CD4-positive, alpha-beta memory T cell (primary cell): ENCODE measurements at regions of chr3 and their contacts with region 1.

Region 1: GRCh38 chr3:125310623-125311081 is 64.5 kb downstream of the ZNF148 start:
- DNase-seq: peak; percentile 40 to 63 (median 46)
- H3K4me3 ChIP-seq: peak overlapping the region; percentile 37 to 60
- H3K4me3 Mint-ChIP-seq: peak overlapping the region; percentile 86 to 96 (median 92)
- H3K27ac ChIP-seq: peak overlapping the region; percentile 61
- H3K27ac Mint-ChIP-seq: peak overlapping the region; percentile 87 to 96 (median 94)
- H3K4me1 ChIP-seq: peaks cover 35% of the 10 kb centered on the region
- H3K4me1 Mint-ChIP-seq: peaks cover 32 to 57% (median 41%) of the 10 kb centered on the region in 4 donors
- H3K27me3 ChIP-seq: no peaks in the 10 kb centered on the region
- H3K27me3 Mint-ChIP-seq: no peaks in the 10 kb centered on the region

Region 2: DNA sequence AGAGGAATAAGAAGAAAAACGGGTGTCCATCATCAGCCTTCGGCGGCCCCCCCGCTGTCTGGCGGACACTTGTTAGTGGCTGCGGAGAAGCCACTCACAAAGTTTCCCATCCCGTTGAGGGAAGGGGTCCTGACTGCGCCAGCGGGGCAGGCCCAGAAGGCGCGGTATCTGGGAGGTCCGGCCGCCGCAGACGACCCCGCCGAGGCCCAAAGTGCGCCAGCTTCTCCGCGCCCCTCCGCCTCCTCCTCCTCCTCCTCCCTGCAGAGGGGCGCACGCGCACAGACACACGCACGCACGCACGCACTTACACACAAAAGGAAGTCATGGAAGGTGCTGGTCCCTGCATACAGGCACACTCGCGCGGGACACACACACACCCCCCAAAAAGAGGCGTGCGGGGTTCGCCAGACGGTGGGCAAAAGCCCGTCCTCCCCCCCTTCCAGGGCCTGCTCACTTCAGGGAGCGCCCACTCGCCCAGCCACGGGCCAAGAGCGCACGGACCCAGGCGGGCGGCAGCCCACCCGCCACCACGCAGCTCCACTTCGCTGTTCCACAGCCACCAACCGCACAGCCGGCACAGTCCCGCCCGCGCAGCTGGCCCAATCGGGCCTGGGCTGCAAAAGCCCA is 46.5 kb after region 1 on chr3:
- CTCF ChIA-PET with region 1: no interaction called
- POLR2A ChIA-PET with region 1: no interaction called
- intact Hi-C with region 1: loop called (anchors 5 kb)
- DNase-seq: peak; percentile 26 to 68 (median 47)
- H3K4me3 ChIP-seq: peak overlapping the region in 1 of 2 donors; percentile 44
- H3K4me3 Mint-ChIP-seq: peak overlapping the region; percentile 78 to 89 (median 82)
- H3K27ac ChIP-seq: no peak overlapping the region
- H3K27ac Mint-ChIP-seq: peak overlapping the region in 6 of 7 donors; percentile 24 to 90 (median 76)
- H3K4me1 ChIP-seq: peaks cover 71% of the 10 kb centered on the region
- H3K4me1 Mint-ChIP-seq: peaks cover 52 to 85% (median 64%) of the 10 kb centered on the region in 4 donors
- H3K27me3 ChIP-seq: no peaks in the 10 kb centered on the region
- H3K27me3 Mint-ChIP-seq: no peaks in the 10 kb centered on the region